WTC11 (cell line): ENCODE measurements at regions of chr3 and their contacts with region 1.

Region 1: GRCh38 chr3:138417559-138417982 is 16.8 kb upstream of the ESYT3 start:
- DNase-seq: peak; percentile 88
- ATAC-seq: peak; percentile 97
- H3K4me3 Mint-ChIP-seq: no peak overlapping the region
- H3K27ac Mint-ChIP-seq: no peak overlapping the region
- H3K4me1 Mint-ChIP-seq: peaks cover 15% of the 10 kb centered on the region
- H3K27me3 Mint-ChIP-seq: peaks cover 27% of the 10 kb centered on the region
- CTCF ChIP-seq: peak; percentile 91

Region 2: GRCh38 chr3:138165061-138165460 is 252.5 kb before region 1 on chr3:
- CTCF ChIA-PET with region 1: no interaction called
- POLR2A ChIA-PET with region 1: no interaction called
- DNase-seq: no peak
- ATAC-seq: no peak
- H3K4me3 Mint-ChIP-seq: no peak overlapping the region
- H3K27ac Mint-ChIP-seq: no peak overlapping the region
- H3K4me1 Mint-ChIP-seq: no peaks in the 10 kb centered on the region
- H3K27me3 Mint-ChIP-seq: no peaks in the 10 kb centered on the region
- CTCF ChIP-seq: no peak

Region 3: GRCh38 chr3:138332472-138333076 is 85.0 kb before region 1 on chr3:
- CTCF ChIA-PET with region 1: interaction called, 22 read pairs
- POLR2A ChIA-PET with region 1: no interaction called
- DNase-seq: no peak
- ATAC-seq: no peak
- H3K4me3 Mint-ChIP-seq: no peak overlapping the region
- H3K27ac Mint-ChIP-seq: peak overlapping the region; percentile 88
- H3K4me1 Mint-ChIP-seq: peaks cover 39% of the 10 kb centered on the region
- H3K27me3 Mint-ChIP-seq: no peaks in the 10 kb centered on the region; the same call in 1 of the 2 replicates
- CTCF ChIP-seq: 0 out of 2 replicates have a peak, but pooled peaks have one; percentile 30

Region 4: DNA sequence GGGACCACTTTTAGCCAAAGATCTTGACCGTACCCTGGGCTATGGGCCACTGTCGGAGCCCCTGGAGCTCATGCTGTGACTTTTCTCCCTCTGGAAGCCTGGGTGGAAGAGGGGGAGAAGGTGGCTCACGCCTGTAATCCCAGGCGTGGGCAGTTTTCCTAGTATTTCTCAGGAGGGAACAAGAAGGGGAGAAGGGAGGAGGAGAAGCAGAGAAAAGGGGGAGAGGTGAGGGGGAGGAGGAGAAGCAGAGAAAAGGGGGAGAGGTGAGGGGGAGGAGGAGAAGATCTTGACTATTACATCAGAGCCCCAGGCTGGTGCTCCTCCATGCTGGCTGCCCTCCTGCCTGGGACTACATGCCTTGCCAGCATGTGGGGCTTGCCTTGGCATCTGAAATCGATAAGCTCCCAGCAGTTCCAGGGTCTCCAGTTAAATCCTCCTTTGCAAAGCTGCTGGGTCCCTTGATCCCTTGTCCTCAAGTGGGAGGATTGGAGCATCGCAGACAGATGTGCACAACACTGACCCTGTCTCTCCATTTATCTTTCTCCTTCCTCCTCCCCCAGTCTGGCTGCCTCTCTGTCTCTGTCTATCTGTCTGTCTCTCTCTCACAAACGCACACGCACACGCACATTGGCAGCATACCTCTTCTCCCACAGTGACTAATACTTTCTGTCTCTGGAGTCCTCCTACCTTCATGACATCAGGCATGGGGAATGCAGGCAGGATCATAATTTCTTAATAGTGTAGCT is 27.6 kb before region 1 on chr3:
- CTCF ChIA-PET with region 1: interaction called, 10 read pairs
- POLR2A ChIA-PET with region 1: no interaction called
- DNase-seq: no peak
- ATAC-seq: no peak
- H3K4me3 Mint-ChIP-seq: no peak overlapping the region
- H3K27ac Mint-ChIP-seq: no peak overlapping the region
- H3K4me1 Mint-ChIP-seq: 0 out of 2 replicates have a peak, but pooled peaks cover 4% of the 10 kb centered on the region
- H3K27me3 Mint-ChIP-seq: no peaks in the 10 kb centered on the region; the same call in 1 of the 2 replicates
- CTCF ChIP-seq: no peak

Region 5: GRCh38 chr3:138434276-138434874 is 16.8 kb after region 1 on chr3 and contains the start of gene ESYT3:
- CTCF ChIA-PET with region 1: interaction called, 37 read pairs
- POLR2A ChIA-PET with region 1: interaction called, 3 read pairs
- DNase-seq: peak; percentile 86
- ATAC-seq: peak; percentile 89
- H3K4me3 Mint-ChIP-seq: peak within 1 kb of the TSS; percentile 71
- H3K27ac Mint-ChIP-seq: no peak within 1 kb of the TSS
- H3K4me1 Mint-ChIP-seq: peaks cover 9% of the 10 kb centered on the region
- H3K27me3 Mint-ChIP-seq: peaks cover 75% of the 10 kb centered on the region
- CTCF ChIP-seq: no peak
- total RNA-seq, gene ESYT3: 4.4 to 6.4 TPM (median 5.7 TPM) in 3 replicates

Region 6: DNA sequence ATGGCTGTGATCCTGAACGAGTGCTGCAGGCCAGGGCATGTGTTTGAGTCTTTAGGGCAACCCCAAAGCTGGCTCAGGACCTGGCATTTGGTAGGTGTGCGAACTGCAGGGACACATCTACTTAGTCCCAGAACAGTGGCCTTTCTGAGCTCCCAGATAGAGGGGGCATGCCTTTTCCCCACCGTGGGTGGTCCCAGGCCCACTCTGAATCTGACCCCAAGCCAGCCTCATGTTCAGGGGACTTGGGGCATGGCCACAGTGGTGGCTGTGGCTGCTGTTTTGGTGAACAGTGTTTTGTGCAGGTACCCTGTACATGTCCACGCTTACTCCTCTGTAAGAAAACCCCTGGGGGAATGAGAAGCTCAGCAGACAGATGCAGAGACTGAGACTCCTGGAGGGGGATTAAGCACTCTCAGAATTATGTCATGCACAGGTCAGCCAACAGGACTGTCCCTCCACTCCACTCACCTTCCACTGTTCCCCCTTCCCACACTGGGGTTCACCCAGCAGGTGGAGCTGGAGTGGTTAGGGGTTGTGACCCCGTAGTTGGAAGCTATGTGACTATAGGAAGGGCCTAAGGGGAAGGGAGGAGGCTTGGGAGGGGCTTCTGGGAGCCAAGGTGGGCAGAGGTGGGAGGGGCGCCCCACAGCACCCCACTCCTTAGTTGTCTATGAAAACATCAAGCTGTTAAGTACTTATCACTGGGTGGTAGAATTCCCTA is 33.3 kb after region 1 on chr3:
- CTCF ChIA-PET with region 1: interaction called, 13 read pairs
- POLR2A ChIA-PET with region 1: no interaction called
- DNase-seq: no peak
- ATAC-seq: peak; percentile 47
- H3K4me3 Mint-ChIP-seq: no peak overlapping the region
- H3K27ac Mint-ChIP-seq: no peak overlapping the region
- H3K4me1 Mint-ChIP-seq: peaks cover 5% of the 10 kb centered on the region; the same call in 1 of the 2 replicates
- H3K27me3 Mint-ChIP-seq: no peaks in the 10 kb centered on the region
- CTCF ChIP-seq: no peak

Region 7: DNA sequence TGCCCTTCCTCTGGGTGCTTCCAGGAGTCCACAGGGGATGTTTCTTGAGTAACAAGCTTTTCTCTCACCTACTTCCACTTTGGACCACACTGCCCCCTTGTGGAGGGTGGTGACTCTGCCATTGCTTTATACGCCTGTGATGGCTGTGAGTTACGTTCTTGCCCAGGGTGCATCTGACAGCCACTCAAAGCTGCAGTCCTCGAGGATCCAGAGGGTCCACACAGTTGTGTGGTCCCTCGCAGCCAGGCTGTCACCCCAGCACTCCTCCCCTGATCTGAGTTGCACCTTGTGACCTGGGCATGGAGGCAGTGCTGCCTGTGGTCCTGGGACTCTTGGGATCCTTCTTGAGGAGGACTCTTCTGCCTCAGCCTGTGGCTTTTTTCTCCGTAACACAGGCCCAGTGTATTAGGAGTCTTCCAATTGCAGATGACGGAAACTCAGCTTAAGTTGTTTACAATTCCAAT is 506.0 kb after region 1 on chr3:
- CTCF ChIA-PET with region 1: interaction called, 11 read pairs
- POLR2A ChIA-PET with region 1: no interaction called
- DNase-seq: peak; percentile 95
- ATAC-seq: peak; percentile 94
- H3K4me3 Mint-ChIP-seq: no peak overlapping the region
- H3K27ac Mint-ChIP-seq: no peak overlapping the region
- H3K4me1 Mint-ChIP-seq: no peaks in the 10 kb centered on the region
- H3K27me3 Mint-ChIP-seq: no peaks in the 10 kb centered on the region; the same call in 1 of the 2 replicates
- CTCF ChIP-seq: peak; percentile 90